PC-3 (cell line): ENCODE measurements at regions of chr9 and their contacts with region 1.

Region 1: GRCh38 chr9:16921855-16922254 is 51.4 kb upstream of the BNC2 start:
- DNase-seq: peak; percentile 77
- ATAC-seq: peak; percentile 95
- H3K4me3 ChIP-seq: no peak overlapping the region
- H3K27ac ChIP-seq: peak overlapping the region; percentile 52
- H3K4me1 ChIP-seq: peaks cover 21% of the 10 kb centered on the region
- H3K27me3 ChIP-seq: no peaks in the 10 kb centered on the region
- CTCF ChIP-seq: peak; percentile 59

Region 2: GRCh38 chr9:16575142-16575985 is 346.5 kb before region 1 on chr9:
- CTCF ChIA-PET with region 1: no interaction called
- POLR2A ChIA-PET with region 1: no interaction called
- intact Hi-C with region 1: loop called (anchors 10 kb)
- DNase-seq: peak; percentile 33
- ATAC-seq: no peak
- H3K4me3 ChIP-seq: no peak overlapping the region
- H3K27ac ChIP-seq: no peak overlapping the region
- H3K4me1 ChIP-seq: peaks cover 25% of the 10 kb centered on the region
- H3K27me3 ChIP-seq: no peaks in the 10 kb centered on the region
- CTCF ChIP-seq: peak; percentile 47; the same call in 1 of the 2 replicates